GM13976 (cell line): ENCODE measurements at regions of chr4 and their contacts with region 1.

Region 1: DNA sequence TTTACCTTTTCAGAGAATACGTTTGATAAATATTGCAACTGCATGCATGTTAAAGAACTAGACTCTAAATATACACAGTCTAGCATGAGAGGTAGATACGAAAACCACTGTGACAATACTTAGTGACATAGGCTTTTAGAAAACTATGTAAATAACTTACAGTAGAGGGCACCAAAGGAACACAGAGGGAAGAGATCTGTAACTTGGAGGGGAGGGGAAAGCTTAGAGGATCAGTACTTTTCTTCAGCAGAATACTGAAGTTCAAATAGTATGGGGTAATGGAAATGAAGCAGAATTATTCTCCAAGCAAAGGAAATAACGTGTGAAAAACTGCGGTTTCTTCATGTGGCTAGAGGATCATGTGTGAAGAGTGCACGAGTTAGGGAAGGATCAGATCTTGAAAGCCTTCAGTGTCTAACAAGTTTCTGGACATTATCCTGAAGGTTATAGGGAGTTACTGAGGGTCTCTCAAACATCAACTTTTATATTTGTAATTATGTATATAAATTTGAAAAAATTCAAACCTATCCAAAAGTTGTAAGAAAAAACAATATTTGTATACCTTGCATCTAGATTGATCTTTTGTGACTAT is 264.3 kb downstream of the NPFFR2 start:
- DNase-seq: peak; percentile 18
- CTCF ChIP-seq: peak; percentile 23

Region 2: DNA sequence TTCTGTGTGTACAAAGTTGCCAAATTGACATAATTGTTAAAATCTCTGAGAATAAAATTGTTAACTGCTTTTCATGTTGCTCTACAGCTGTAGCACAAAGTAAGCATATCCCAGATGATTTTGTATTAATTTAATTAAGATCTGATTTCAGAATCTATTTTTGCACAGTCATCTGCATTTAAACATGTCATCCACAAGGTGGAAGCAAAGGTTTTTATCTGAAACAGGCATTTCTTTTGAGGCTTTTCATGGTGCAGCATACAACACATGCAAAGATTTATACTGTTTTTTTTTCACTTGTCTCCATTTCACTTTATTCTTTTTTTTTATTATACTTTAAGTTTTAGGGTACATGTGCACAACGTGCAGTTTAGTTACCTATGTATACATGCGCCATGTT is 563.4 kb before region 1 on chr4:
- in situ Hi-C with region 1: loop called (anchors 25 kb)
- DNase-seq: no peak
- CTCF ChIP-seq: peak; percentile 29

Region 3: GRCh38 chr4:72489267-72489666 is 193.2 kb after region 1 on chr4:
- in situ Hi-C with region 1: no loop called
- DNase-seq: no peak
- CTCF ChIP-seq: no peak

Region 4: DNA sequence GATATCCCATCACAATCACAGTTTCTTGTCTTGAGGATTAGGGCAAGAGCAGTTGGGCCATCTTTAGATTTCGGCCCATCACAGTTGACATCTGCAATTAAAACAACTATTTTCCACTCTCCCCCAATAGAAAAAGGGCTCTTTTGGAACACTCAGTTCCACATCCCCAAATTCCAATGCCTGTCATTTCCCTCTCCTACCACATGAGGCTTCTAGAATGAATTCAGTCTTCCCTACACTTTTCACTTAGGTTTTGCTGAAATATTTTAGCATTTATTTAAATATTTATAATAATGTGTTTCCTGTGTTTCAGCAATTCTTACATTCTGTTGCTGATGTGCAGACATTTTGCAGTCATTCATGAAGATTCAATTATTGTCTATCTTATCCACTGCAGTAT is 655.1 kb after region 1 on chr4:
- in situ Hi-C with region 1: no loop called
- DNase-seq: no peak
- CTCF ChIP-seq: no peak